SK-N-SH (cell line): ENCODE measurements at regions of chr10 and their contacts with region 1.

Region 1: GRCh38 chr10:75235375-75236177 is at the start of gene COMTD1:
- DNase-seq: peak; percentile 95
- H3K4me3 ChIP-seq: peak within 1 kb of the TSS; percentile 61 to 72
- H3K27ac ChIP-seq: peak within 1 kb of the TSS in 1 of 2 experiments; percentile 73; a peak in 1 of 4 replicates
- H3K4me1 ChIP-seq: peaks cover 0 to 37% of the 10 kb centered on the region in 2 experiments; a peak in 1 of 4 replicates
- H3K27me3 ChIP-seq: no peaks in the 10 kb centered on the region
- CTCF ChIP-seq: peak; percentile 98
- EP300 ChIP-seq: no peak
- RAD21 ChIP-seq: peak; percentile 95
- polyA plus RNA-seq, gene COMTD1: 7.6 and 8.0 TPM in 2 replicates

Region 2: DNA sequence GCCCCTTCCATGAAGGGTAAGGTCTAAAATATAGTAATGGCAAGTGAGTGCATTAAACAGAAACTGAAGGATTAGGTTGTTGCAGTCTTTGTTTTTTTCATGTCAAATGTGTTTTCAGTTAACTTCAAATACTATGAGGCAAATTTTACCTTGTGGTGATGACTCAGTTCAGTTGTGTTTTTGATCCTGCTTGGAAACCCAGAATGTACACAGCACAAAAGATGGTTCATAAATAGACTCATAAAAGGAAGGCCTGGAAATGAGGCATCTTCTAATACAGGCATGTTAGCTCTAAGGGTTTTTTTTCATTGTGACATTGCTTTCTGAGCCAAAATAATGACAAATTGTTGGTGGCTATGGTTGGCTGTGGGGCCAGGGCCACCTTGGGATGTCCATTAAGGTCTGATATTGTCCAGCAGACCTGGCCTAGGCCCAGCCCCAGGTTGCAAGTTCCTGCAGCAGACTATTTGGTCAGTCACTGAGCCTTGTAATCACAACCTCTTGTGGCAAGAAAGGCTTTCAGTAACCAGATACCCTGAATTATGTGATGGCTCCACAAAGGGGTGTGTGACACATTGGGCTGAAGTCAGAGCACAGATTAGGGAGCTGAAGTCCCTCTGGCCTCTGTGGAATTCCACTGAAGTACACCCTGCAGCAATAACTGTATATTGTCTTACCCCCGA is 193.1 kb before region 1 on chr10:
- CTCF ChIA-PET with region 1: no interaction called
- POLR2A ChIA-PET with region 1: no interaction called
- DNase-seq: no peak
- H3K4me3 ChIP-seq: no peak overlapping the region
- H3K27ac ChIP-seq: peak overlapping the region; percentile 44 to 68
- H3K4me1 ChIP-seq: peaks cover 0 to 15% of the 10 kb centered on the region in 2 experiments; a peak in 2 of 4 replicates
- H3K27me3 ChIP-seq: no peaks in the 10 kb centered on the region
- CTCF ChIP-seq: no peak
- EP300 ChIP-seq: no peak
- RAD21 ChIP-seq: no peak

Region 3: GRCh38 chr10:75099952-75100763 is 135.4 kb before region 1 on chr10:
- CTCF ChIA-PET with region 1: interaction called, 10 read pairs
- POLR2A ChIA-PET with region 1: no interaction called
- DNase-seq: peak; percentile 93
- H3K4me3 ChIP-seq: no peak overlapping the region; a peak in 1 of 4 replicates
- H3K27ac ChIP-seq: no peak overlapping the region
- H3K4me1 ChIP-seq: peaks cover 0 to 3% of the 10 kb centered on the region in 2 experiments; a peak in 1 of 4 replicates
- H3K27me3 ChIP-seq: no peaks in the 10 kb centered on the region
- CTCF ChIP-seq: peak; percentile 84
- EP300 ChIP-seq: no peak
- RAD21 ChIP-seq: peak; percentile 94

Region 4: GRCh38 chr10:75187961-75188426 is 47.6 kb before region 1 on chr10:
- CTCF ChIA-PET with region 1: interaction called, 40 read pairs
- POLR2A ChIA-PET with region 1: no interaction called
- DNase-seq: peak; percentile 63
- H3K4me3 ChIP-seq: no peak overlapping the region
- H3K27ac ChIP-seq: no peak overlapping the region
- H3K4me1 ChIP-seq: 0 out of 4 replicates have a peak, but pooled peaks cover 0 to 5% of the 10 kb centered on the region in 2 experiments
- H3K27me3 ChIP-seq: no peaks in the 10 kb centered on the region
- CTCF ChIP-seq: peak; percentile 75
- EP300 ChIP-seq: no peak
- RAD21 ChIP-seq: peak; percentile 74

Region 5: GRCh38 chr10:75245491-75246250 is 10.1 kb after region 1 on chr10:
- CTCF ChIA-PET with region 1: interaction called, 30 read pairs
- POLR2A ChIA-PET with region 1: no interaction called
- DNase-seq: no peak
- H3K4me3 ChIP-seq: no peak overlapping the region
- H3K27ac ChIP-seq: no peak overlapping the region
- H3K4me1 ChIP-seq: no peaks in the 10 kb centered on the region
- H3K27me3 ChIP-seq: no peaks in the 10 kb centered on the region
- CTCF ChIP-seq: no peak
- EP300 ChIP-seq: no peak
- RAD21 ChIP-seq: no peak

Region 6: GRCh38 chr10:75401569-75402485 is 166.3 kb after region 1 on chr10 and contains the start of gene ZNF503:
- CTCF ChIA-PET with region 1: interaction called, 13 read pairs
- POLR2A ChIA-PET with region 1: interaction called, 3 read pairs
- DNase-seq: peak; percentile 95
- H3K4me3 ChIP-seq: peak within 1 kb of the TSS; percentile 82 to 96
- H3K27ac ChIP-seq: peak within 1 kb of the TSS; percentile 93 to 98
- H3K4me1 ChIP-seq: peaks cover 0 to 20% of the 10 kb centered on the region in 2 experiments; a peak in 2 of 4 replicates
- H3K27me3 ChIP-seq: no peaks in the 10 kb centered on the region
- CTCF ChIP-seq: 0 out of 2 replicates have a peak, but pooled peaks have one; percentile 14
- EP300 ChIP-seq: peak in 1 of 2 experiments; percentile 34; a peak in 2 of 4 replicates
- RAD21 ChIP-seq: peak; percentile 43
- polyA plus RNA-seq, gene ZNF503: 4.5 and 5.9 TPM in 2 replicates

Region 7: GRCh38 chr10:75469006-75469616 is 233.5 kb after region 1 on chr10:
- CTCF ChIA-PET with region 1: no interaction called
- POLR2A ChIA-PET with region 1: no interaction called
- DNase-seq: no peak
- H3K4me3 ChIP-seq: no peak overlapping the region
- H3K27ac ChIP-seq: peak overlapping the region in 1 of 2 experiments; percentile 39; a peak in 2 of 4 replicates
- H3K4me1 ChIP-seq: peaks cover 5% of the 10 kb centered on the region in 2 experiments; a peak in 1 of 4 replicates
- H3K27me3 ChIP-seq: no peaks in the 10 kb centered on the region
- CTCF ChIP-seq: no peak
- EP300 ChIP-seq: peak in 1 of 2 experiments; percentile 68; a peak in 1 of 4 replicates
- RAD21 ChIP-seq: no peak